OCI-LY7 (cell line): ENCODE measurements at regions of chr9 and their contacts with region 1.

Region 1: DNA sequence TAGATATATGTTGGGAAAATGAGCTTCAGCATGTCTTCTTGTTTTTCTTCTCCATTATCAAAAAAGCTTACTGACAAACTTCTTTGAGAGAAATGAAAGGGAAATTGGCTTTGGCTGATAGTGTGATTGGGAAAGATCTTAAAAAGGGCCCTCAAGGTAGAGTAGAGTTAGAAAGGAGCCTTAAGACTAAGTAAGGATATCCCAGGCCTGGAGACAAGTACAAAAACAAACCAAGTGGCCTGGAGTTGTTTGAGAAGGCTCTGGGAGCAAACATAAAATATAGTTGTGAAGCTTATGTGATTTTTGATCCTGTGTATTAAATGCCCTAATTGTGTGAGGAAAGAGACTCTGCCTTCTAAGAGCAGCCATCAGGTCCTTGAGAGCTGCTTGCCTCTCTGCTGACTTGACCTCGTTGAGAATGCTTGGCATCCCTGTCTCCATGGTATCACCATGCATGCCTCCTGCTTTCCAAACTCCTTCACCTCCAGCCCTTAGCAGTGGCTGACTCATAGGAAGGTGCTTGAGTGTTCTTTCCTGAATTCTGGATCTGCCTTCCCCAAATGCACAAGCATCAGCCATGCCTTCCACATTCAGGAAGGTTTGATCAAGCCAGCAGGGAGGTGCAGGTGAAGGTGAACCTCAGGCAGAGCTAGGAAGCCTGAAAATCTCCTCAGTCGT is 78.9 kb downstream of the SMARCA2 start:
- DNase-seq: no peak
- H3K4me3 ChIP-seq: no peak overlapping the region
- H3K27ac ChIP-seq: no peak overlapping the region
- H3K4me1 ChIP-seq: no peaks in the 10 kb centered on the region
- CTCF ChIP-seq: no peak

Region 2: DNA sequence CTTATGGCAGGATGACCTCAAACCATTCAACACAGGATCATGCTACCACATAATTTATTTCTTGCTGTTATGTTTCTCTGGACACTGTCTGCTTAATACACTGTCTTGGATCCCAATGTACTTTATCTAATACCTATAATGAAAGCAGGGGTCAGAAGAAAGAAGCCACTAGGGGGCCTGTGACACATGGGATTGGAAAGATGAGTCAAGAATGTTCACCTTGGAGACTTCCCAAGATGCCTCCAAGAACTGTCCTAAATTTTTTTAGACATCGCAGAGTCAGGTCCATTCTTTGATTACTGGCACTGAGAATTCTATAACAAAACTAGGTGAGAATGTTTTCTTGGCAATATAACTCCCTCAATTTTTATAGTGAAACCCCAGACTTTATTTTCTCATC is 384.7 kb before region 1 on chr9:
- CTCF ChIA-PET with region 1: no interaction called
- POLR2A ChIA-PET with region 1: no interaction called
- intact Hi-C with region 1: loop called (anchors 10 kb)
- DNase-seq: peak; percentile 11
- H3K4me3 ChIP-seq: no peak overlapping the region
- H3K27ac ChIP-seq: no peak overlapping the region
- H3K4me1 ChIP-seq: no peaks in the 10 kb centered on the region
- CTCF ChIP-seq: peak; percentile 78